Dorsolateral prefrontal cortex (tissue), 120 donors: ENCODE measurements at regions of chr5 and their contacts with region 1.

Region 1: DNA sequence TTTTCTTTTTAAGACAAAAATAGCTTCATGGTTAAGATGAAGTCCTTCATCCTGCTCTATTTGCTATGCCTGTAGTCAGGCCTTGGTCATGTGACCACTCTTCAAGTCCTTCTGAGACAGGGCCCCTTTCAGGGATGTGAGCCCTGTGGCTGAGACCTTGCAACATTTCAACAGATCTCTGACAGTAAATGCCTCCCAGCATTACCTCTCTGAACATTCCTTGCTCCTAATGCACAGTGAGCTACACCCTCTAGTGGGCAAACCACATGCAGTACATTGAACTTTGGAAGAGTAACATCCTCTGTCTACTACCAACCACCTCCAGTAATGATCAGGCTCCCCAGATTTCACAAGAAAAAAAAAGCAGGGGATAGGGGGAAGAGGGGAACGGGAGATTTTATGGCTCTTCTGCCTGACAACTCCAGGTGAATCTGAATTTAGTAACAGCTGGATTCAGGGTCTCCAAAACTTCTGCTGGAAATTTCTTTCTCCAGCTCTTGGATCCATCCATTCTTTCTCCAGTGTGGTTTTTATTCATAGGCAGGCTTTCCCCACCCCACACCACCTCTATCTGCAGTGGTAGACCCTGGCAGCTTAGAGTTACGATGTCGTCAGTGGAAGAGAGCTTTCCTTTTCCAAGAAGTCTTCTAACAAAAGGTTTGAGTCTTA is 8.9 kb upstream of the FBXO38 start:
- DNase-seq: peak in 4 of 10 donors; percentile 4 to 39 (median 18)
- H3K4me3 ChIP-seq: no peak overlapping the region
- H3K27ac ChIP-seq: no peak overlapping the region
- H3K27me3 ChIP-seq: no peaks in the 10 kb centered on the region
- CTCF ChIP-seq: peak in 55 of 56 donors; percentile 45 to 77 (median 68)

Region 2: DNA sequence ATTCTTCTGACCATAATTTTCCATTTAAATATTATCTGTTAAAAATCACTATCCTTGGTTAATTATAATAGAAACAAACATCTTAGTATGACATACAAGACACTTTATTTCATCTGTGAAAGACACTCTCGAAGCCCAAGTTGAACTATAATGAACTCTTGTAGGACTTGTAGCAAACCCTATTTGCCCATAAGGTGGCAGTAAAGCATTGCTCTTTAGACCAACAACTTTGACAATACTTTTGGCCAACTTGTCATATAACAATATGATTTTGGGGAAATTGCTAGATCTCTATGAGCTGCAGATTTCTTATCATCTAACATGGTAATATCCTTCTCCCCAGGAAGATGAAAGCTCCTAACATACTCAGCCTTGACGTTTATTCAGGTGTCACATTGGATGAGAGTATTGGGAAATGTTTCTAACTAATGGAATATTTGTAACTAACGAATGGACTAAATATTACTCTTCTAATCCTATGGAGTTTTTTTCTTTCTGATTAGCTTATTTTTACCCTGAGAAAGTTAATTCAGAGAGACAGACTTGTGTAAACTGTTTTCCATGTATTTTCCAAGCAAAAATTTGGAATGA is 195.5 kb before region 1 on chr5:
- intact Hi-C with region 1: loop called in 1 of 2 experiments (anchors 10 kb)
- DNase-seq: no peak
- H3K4me3 ChIP-seq: no peak overlapping the region
- H3K27ac ChIP-seq: no peak overlapping the region
- H3K27me3 ChIP-seq: no peaks in the 10 kb centered on the region
- CTCF ChIP-seq: peak; percentile 34 to 86 (median 72)

Region 3: GRCh38 chr5:148290271-148291195 is 84.3 kb before region 1 on chr5:
- intact Hi-C with region 1: loop called in 1 of 2 experiments (anchors 10 kb)
- DNase-seq: no peak
- H3K4me3 ChIP-seq: peak overlapping the region in 8 of 59 donors; percentile 2 to 33 (median 10)
- H3K27ac ChIP-seq: peak overlapping the region in 33 of 59 donors; percentile 0 to 80 (median 41)
- H3K27me3 ChIP-seq: no peaks in the 10 kb centered on the region
- CTCF ChIP-seq: peak in 55 of 56 donors; percentile 15 to 72 (median 49)

Region 4: GRCh38 chr5:148336704-148337435 is 38.0 kb before region 1 on chr5:
- intact Hi-C with region 1: no loop called
- DNase-seq: no peak
- H3K4me3 ChIP-seq: no peak overlapping the region
- H3K27ac ChIP-seq: peak overlapping the region in 1 of 59 donors; percentile 12
- H3K27me3 ChIP-seq: no peaks in the 10 kb centered on the region
- CTCF ChIP-seq: no peak

Region 5: GRCh38 chr5:148569948-148570347 is 195.1 kb after region 1 on chr5:
- intact Hi-C with region 1: no loop called
- DNase-seq: no peak
- H3K4me3 ChIP-seq: no peak overlapping the region
- H3K27ac ChIP-seq: no peak overlapping the region
- H3K27me3 ChIP-seq: no peaks in the 10 kb centered on the region
- CTCF ChIP-seq: no peak